ENCODE measurements at regions of chr17 and their contacts with region 1.

Region 1: GRCh38 chr17:54992797-54993639 is 24.5 kb downstream of the STXBP4 start:
- DNase-seq: no peak
- ATAC-seq: peak; percentile 38 to 47

Region 2: DNA sequence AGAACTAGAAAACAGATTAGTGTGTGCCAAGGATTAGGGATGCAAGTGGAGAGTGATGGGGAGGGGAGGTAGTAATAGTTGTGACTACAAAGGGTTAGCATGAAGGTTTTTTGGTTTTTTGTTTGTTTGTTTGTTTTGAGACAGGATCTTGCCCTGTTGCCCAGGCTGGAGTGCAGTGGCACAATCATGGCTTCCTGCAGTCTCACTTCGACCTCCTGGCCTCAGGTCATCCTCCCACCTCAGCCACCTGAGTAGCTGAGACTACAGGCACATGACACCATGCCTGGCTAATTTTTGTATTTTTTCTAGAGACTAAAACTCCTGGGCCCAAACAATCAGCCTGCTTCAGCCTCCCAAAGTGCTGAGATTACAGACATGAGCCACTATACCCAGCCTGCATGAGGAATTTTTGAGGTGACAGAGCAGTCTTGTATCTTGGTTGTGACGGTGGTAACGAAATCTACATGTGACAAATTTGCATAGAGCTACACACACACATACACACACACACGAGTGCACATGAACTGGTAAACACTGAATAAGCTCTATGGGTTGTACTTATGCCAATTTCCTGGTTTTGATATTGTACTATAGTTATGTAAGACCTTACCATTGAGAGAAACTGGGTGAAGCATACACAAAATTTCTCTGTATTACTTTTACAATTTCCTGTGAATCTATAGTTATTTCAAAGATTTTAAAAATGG is 152.0 kb before region 1 on chr17:
- intact Hi-C with region 1: no loop called
- DNase-seq: no peak
- ATAC-seq: no peak

Region 3: DNA sequence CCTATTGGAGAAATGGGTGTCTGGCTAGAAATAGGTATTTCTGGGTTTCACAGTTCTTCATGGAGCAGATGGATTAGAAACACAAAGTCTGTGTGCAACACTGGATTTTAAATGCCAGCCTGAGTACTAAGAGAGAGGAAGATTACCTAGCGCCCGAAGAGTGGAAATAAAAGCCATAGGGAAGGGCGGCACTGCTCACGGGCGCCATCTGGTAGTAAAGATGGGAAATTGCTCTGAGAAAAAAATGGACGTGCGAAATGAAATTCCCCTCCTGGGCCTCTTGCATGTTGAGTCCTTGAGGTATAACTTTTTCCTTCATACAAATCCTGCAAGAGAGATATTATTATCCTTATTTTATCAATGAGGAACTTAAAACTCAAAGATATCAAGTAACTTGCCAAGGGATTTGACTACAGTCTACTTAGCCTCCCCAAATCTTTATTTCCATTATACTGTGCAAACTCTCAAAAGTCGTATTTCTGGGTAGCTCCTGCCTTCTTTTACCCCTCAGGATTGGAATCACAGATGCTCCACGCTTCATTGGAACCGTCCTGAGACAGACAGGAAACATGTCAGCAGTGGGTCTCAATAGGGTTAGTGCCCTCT is 355.8 kb after region 1 on chr17:
- intact Hi-C with region 1: loop called (anchors 2 to 10 kb)
- DNase-seq: peak; percentile 42
- ATAC-seq: peak; percentile 73 to 81

Region 4: DNA sequence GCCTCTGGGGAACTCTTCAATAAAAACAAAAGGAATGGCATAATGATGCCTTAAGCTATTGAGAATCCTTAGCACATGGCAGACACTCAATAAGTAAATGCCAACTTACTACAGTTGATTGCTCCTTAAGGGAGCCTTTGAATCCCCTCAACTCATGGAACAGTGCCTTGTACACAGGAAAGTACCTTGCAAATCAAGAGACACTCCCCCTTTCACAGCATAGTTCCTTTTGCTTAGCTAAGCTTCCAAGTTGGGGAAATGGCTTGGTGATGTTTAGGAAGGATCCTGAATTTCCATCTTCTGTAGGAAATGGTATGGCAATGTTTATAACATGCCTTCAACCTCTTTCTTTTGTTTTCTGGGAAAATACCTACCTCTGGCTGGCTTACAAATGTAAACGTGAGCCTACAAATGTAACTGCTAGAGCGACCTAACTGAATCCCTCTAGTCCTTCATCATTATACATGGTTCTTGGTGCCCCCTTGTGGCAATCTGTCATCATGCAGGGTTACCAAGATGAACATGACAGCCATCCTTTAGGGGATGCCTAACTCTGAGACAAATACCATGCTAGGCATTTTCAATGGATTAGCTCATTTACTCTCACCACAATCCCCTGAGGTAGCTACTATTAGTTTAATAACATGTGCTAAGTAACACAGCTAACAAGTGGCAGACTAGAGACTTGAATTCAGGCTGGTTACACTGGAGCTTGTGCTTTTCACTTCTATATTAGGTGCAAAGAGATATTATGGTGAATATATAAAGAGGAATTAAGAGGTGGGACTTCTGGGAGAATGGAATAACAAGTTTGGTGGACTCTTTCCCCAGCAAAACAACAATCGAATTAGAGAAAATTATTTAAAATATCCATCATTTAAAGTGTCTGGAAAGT is 363.7 kb after region 1 on chr17:
- intact Hi-C with region 1: loop called in 1 of 2 experiments (anchors 10 kb)
- DNase-seq: peak; percentile 66
- ATAC-seq: peak; percentile 57 to 74

Region 5: DNA sequence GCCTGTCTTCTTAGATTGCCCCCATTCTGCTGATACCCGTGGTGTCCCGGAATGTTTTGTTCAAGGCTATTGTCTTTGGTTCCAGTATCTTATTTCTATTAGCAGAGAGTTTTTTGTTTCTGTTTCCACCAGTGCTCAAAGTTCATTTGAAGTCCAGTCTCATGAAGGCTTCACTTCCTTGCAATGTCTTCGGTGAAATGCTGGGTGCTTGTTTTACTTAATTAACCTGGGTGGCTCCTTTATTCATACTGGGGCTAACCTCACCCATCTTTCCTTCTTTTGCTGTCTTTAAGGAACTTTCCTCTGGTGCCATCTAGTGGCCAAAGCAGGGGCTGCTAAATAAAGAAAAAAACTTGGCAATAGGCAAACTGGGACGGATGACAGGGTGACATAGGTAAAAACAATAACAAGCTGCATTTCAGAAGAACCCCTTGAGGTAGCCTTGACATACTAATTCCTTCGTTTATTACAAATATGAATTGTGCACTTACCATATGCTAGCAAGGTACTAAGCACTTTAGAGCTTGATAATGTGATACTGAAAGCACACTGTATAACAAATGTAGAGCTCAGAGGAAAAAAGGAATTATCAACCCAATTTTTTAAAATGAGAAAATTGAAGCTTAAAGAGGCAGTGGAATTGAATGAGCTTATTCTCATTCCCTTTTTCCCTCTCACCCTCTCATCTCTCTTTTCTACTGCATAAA is 521.0 kb after region 1 on chr17:
- intact Hi-C with region 1: loop called in 1 of 2 experiments (anchors 10 kb)
- DNase-seq: peak; percentile 69
- ATAC-seq: peak; percentile 57 to 67

Measured in left cardiac atrium (tissue), 4 donors.